Activated CD4-positive, alpha-beta memory T cell treated with anti-CD3 and anti-CD28 coated beads for 36 hours (primary cell): ENCODE measurements at regions of chr2 and their contacts with region 1.

Region 1: GRCh38 chr2:25276569-25277465 is 64.9 kb downstream of the DNMT3A start:
- DNase-seq: peak; percentile 88
- H3K4me3 Mint-ChIP-seq: peak overlapping the region; percentile 65
- H3K27ac Mint-ChIP-seq: peak overlapping the region; percentile 90
- H3K4me1 Mint-ChIP-seq: peaks cover 66% of the 10 kb centered on the region
- H3K27me3 Mint-ChIP-seq: no peaks in the 10 kb centered on the region

Region 2: DNA sequence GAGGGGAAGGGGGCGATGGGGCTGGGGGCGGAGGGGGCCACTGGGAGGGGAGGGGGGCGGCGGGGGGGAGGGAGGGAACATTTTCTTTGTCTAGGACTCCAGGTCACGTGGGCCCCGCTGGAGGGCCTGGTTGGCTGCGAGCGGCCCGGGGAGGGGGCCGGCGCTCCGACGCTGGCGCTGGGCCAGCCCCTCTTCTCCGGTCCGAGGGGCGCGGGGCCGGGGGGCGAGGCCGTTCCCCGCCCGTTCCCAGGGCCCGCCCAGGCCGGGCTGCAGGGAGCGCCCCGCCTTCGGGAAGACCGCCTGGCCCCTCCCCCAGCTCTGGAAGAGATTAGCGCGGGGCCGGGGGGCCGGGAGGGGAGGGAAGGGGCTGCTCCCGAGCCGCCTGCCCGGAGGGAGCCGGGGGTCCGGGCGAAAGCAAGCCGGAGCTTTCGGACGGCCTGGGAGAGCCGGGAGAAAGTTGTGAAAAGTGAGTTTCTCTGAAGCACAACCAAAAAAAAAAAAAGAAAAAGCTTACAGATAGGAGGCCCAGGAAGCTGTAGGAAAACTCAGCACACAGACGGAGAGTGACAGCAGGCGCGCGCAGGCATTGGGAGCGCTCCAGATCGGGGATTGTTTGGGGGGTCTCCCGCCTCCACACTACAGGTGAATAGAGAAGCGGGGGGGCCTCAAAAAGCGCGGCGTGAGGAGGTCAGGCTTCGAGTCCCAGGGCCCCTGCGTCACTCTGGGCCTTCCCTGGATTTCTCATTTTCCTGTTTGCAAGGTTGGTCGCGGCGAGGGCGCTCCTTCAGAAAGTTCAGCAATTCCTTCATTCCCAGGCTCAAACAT is 24.3 kb before region 1 on chr2:
- CTCF ChIA-PET with region 1: interaction called, 4 read pairs
- POLR2A ChIA-PET with region 1: interaction called, 9 read pairs
- intact Hi-C with region 1: loop called (anchors 1 kb)
- DNase-seq: peak; percentile 67
- H3K4me3 Mint-ChIP-seq: peak overlapping the region; percentile 52
- H3K27ac Mint-ChIP-seq: peak overlapping the region; percentile 36
- H3K4me1 Mint-ChIP-seq: peaks cover 23% of the 10 kb centered on the region
- H3K27me3 Mint-ChIP-seq: no peaks in the 10 kb centered on the region

Region 3: GRCh38 chr2:25294573-25295462 is 18.0 kb after region 1 on chr2:
- CTCF ChIA-PET with region 1: interaction called, 11 read pairs
- POLR2A ChIA-PET with region 1: interaction called, 4 read pairs
- intact Hi-C with region 1: loop called (anchors 2 kb)
- DNase-seq: peak; percentile 89
- H3K4me3 Mint-ChIP-seq: peak overlapping the region; percentile 59
- H3K27ac Mint-ChIP-seq: peak overlapping the region; percentile 92
- H3K4me1 Mint-ChIP-seq: peaks cover 41% of the 10 kb centered on the region
- H3K27me3 Mint-ChIP-seq: no peaks in the 10 kb centered on the region

Region 4: DNA sequence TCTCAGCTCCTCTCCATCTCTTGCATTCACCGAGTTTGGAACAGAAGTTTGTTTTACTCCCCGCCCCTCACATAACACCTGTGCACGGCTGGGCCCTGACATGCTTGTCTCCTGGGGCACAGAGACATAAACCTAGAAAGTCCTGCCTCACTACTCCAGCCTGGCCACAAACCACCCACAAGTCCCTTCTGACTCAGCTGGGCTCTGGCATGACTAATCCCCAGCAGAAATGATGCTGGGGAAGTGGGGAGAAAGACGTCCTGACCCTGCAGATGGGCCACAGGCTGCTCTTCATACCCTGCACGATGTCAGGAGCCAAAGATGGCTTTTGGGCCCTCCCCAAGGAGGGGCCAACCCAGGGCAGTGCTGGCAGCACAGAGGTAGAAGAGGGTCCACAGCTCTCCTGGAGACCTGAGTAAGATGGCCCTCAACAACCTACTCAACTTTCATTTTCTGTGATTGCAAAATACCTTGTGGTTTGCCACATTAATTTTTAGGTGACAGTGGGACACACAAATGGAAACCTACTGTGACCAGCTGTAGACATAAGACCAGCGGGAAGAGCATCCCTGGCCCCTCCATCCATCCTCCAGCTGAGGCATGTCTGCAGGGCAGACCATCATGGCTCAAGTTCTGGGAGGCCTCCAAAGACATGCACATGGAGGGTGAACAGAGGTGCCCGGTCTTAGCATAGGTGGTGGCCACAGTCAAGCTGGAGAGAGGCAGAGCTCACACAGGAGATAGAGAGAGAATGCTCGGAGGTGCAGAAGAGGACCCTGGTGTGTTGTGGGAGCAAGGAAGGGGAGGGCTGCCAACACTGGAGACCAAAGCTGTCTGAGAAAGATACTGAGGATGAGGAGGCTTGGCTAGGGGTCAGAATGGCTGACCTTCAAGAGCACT is 24.9 kb after region 1 on chr2:
- CTCF ChIA-PET with region 1: interaction called, 17 read pairs
- POLR2A ChIA-PET with region 1: interaction called, 8 read pairs
- intact Hi-C with region 1: loop called (anchors 1 kb)
- DNase-seq: peak; percentile 94
- H3K4me3 Mint-ChIP-seq: no peak overlapping the region
- H3K27ac Mint-ChIP-seq: peak overlapping the region; percentile 47
- H3K4me1 Mint-ChIP-seq: peaks cover 58% of the 10 kb centered on the region
- H3K27me3 Mint-ChIP-seq: no peaks in the 10 kb centered on the region

Region 5: GRCh38 chr2:25309402-25309801 is 32.6 kb after region 1 on chr2:
- CTCF ChIA-PET with region 1: interaction called, 14 read pairs
- POLR2A ChIA-PET with region 1: interaction called, 6 read pairs
- intact Hi-C with region 1: loop called (anchors 1 kb)
- DNase-seq: peak; percentile 75
- H3K4me3 Mint-ChIP-seq: no peak overlapping the region
- H3K27ac Mint-ChIP-seq: no peak overlapping the region
- H3K4me1 Mint-ChIP-seq: peaks cover 87% of the 10 kb centered on the region
- H3K27me3 Mint-ChIP-seq: no peaks in the 10 kb centered on the region

Region 6: GRCh38 chr2:25314514-25315315 is 37.9 kb after region 1 on chr2:
- CTCF ChIA-PET with region 1: interaction called, 14 read pairs
- POLR2A ChIA-PET with region 1: interaction called, 6 read pairs
- intact Hi-C with region 1: loop called (anchors 1 kb)
- DNase-seq: peak; percentile 96
- H3K4me3 Mint-ChIP-seq: peak overlapping the region; percentile 90
- H3K27ac Mint-ChIP-seq: peak overlapping the region; percentile 95
- H3K4me1 Mint-ChIP-seq: peaks cover 61% of the 10 kb centered on the region
- H3K27me3 Mint-ChIP-seq: no peaks in the 10 kb centered on the region

Region 7: DNA sequence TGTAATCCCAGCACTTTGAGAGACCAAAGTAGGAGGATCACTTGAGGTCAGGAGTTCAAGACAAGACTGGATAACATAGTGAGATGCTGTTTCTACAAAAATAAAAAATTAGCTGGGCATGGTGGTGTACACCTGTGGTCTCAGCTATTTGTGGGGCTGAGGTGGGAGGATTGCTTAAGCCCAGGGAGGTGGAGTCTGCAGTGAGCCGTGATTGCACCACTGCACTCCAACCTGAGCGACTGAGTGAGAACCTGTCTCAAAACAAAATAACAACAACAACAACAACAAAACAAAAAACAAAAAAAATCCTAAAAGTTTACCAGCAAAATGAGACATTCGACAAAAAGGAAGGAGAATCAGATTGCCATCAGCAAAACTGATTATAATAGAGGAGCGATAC is 225.1 kb after region 1 on chr2:
- CTCF ChIA-PET with region 1: no interaction called
- POLR2A ChIA-PET with region 1: no interaction called
- intact Hi-C with region 1: no loop called
- DNase-seq: no peak
- H3K4me3 Mint-ChIP-seq: no peak overlapping the region
- H3K27ac Mint-ChIP-seq: no peak overlapping the region
- H3K4me1 Mint-ChIP-seq: peaks cover 7% of the 10 kb centered on the region
- H3K27me3 Mint-ChIP-seq: no peaks in the 10 kb centered on the region